GM12878 (cell line): ENCODE measurements at regions of chr15 and their contacts with region 1.

Region 1: GRCh38 chr15:90954712-90955671 is at the start of gene RCCD1:
- DNase-seq: peak; percentile 91
- ATAC-seq: peak; percentile 98
- H3K4me3 ChIP-seq: peak within 1 kb of the TSS; percentile 87
- H3K27ac ChIP-seq: peak within 1 kb of the TSS; percentile 98
- H3K4me1 ChIP-seq: peaks cover 3% of the 10 kb centered on the region; the same call in 1 of the 2 replicates
- H3K27me3 ChIP-seq: no peaks in the 10 kb centered on the region
- CTCF ChIP-seq: no peak
- EP300 ChIP-seq: no peak; a peak in 1 of 4 replicates
- POLR2A ChIP-seq: peak; percentile 93
- RAD21 ChIP-seq: no peak
- polyA plus RNA-seq, gene RCCD1: 5.2 to 8.0 TPM

Region 2: GRCh38 chr15:89575146-89575655 is 1379.8 kb before region 1 on chr15 and contains the start of gene TICRR:
- CTCF ChIA-PET with region 1: no interaction called
- POLR2A ChIA-PET with region 1: no interaction called
- RAD21 ChIA-PET with region 1: no interaction called
- SMC1A ChIA-PET with region 1: no interaction called
- in situ Hi-C with region 1: loop called (anchors 25 kb)
- intact Hi-C with region 1: no loop called
- DNase-seq: peak; percentile 99
- ATAC-seq: peak; percentile 94
- H3K4me3 ChIP-seq: peak within 1 kb of the TSS; percentile 87
- H3K27ac ChIP-seq: peak within 1 kb of the TSS; percentile 66
- H3K4me1 ChIP-seq: peaks cover 3% of the 10 kb centered on the region; the same call in 1 of the 2 replicates
- H3K27me3 ChIP-seq: no peaks in the 10 kb centered on the region
- CTCF ChIP-seq: no peak
- EP300 ChIP-seq: no peak
- POLR2A ChIP-seq: peak; percentile 75
- RAD21 ChIP-seq: no peak
- polyA plus RNA-seq, gene TICRR: 0.58 to 1.1 TPM

Region 3: DNA sequence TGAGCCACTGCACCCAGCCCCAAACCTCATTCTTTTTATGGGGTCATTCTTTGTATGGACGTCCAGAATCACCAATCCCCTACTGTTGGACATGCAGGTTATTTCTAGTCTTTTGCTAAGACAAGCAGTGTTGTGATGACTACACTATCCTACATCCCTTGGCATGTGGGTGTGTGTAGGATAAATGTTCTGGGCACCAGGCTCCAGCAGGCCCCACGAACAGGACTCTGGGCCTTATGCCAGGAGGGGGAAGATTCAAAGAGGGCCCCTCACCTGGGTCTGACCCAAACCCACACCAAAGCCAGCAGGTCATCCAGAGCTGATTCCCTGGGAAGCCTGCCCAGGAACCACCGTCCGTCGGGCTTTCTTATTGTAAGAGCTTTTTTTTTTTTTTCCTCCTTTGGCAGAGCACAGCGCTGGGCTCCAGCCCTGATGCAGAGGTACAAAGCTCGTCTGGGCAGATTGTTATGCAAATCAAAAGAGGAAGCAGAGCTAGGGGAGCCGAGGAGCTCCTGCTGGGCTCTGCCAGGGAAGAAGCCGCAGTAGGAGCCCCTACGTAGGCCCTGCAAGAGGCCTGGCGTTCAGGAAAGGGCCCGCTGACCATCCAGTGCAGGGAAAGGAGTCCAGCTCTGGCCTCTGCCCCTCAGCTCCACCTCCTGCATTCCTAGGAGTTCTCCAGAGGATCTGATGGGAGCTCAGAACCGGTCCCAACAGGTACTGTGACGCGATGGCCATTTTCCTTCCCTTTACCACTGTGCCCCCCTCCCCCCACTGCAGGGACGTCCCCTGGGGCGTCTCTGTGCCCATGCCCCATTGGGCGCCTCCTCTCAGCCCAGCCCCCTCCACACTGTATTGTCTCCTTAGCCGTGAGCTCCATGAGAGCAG is 115.6 kb before region 1 on chr15:
- CTCF ChIA-PET with region 1: no interaction called
- POLR2A ChIA-PET with region 1: no interaction called
- RAD21 ChIA-PET with region 1: no interaction called
- SMC1A ChIA-PET with region 1: no interaction called
- in situ Hi-C with region 1: no loop called
- intact Hi-C with region 1: no loop called
- DNase-seq: no peak
- ATAC-seq: peak; percentile 84
- H3K4me3 ChIP-seq: peak overlapping the region; percentile 50
- H3K27ac ChIP-seq: peak overlapping the region; percentile 56
- H3K4me1 ChIP-seq: peaks cover 22% of the 10 kb centered on the region
- H3K27me3 ChIP-seq: no peaks in the 10 kb centered on the region
- CTCF ChIP-seq: no peak
- EP300 ChIP-seq: no peak
- POLR2A ChIP-seq: peak; percentile 51
- RAD21 ChIP-seq: no peak

Region 4: GRCh38 chr15:90982135-90982534 is 27.1 kb after region 1 on chr15:
- CTCF ChIA-PET with region 1: interaction called, 22 read pairs
- POLR2A ChIA-PET with region 1: interaction called, 26 read pairs
- RAD21 ChIA-PET with region 1: interaction called, 4 read pairs
- SMC1A ChIA-PET with region 1: interaction called, 14 read pairs
- in situ Hi-C with region 1: no loop called
- intact Hi-C with region 1: no loop called
- DNase-seq: no peak
- ATAC-seq: peak; percentile 75
- H3K4me3 ChIP-seq: no peak overlapping the region
- H3K27ac ChIP-seq: peak overlapping the region; percentile 79
- H3K4me1 ChIP-seq: peaks cover 27% of the 10 kb centered on the region
- H3K27me3 ChIP-seq: no peaks in the 10 kb centered on the region
- CTCF ChIP-seq: no peak
- EP300 ChIP-seq: no peak
- POLR2A ChIP-seq: no peak
- RAD21 ChIP-seq: no peak

Region 5: GRCh38 chr15:91022075-91022835 is 67.3 kb after region 1 on chr15 and contains the start of gene VPS33B:
- CTCF ChIA-PET with region 1: interaction called, 5 read pairs
- POLR2A ChIA-PET with region 1: no interaction called
- RAD21 ChIA-PET with region 1: interaction called, 9 read pairs
- SMC1A ChIA-PET with region 1: interaction called, 3 read pairs
- in situ Hi-C with region 1: no loop called
- intact Hi-C with region 1: loop called (anchors 5 kb)
- DNase-seq: peak; percentile 63
- ATAC-seq: peak; percentile 86
- H3K4me3 ChIP-seq: peak within 1 kb of the TSS; percentile 93
- H3K27ac ChIP-seq: peak within 1 kb of the TSS; percentile 88
- H3K4me1 ChIP-seq: peaks cover 3% of the 10 kb centered on the region; the same call in 1 of the 2 replicates
- H3K27me3 ChIP-seq: no peaks in the 10 kb centered on the region
- CTCF ChIP-seq: no peak
- EP300 ChIP-seq: no peak
- POLR2A ChIP-seq: peak; percentile 80
- RAD21 ChIP-seq: no peak
- polyA plus RNA-seq, gene VPS33B: 11.8 to 18.6 TPM

Region 6: DNA sequence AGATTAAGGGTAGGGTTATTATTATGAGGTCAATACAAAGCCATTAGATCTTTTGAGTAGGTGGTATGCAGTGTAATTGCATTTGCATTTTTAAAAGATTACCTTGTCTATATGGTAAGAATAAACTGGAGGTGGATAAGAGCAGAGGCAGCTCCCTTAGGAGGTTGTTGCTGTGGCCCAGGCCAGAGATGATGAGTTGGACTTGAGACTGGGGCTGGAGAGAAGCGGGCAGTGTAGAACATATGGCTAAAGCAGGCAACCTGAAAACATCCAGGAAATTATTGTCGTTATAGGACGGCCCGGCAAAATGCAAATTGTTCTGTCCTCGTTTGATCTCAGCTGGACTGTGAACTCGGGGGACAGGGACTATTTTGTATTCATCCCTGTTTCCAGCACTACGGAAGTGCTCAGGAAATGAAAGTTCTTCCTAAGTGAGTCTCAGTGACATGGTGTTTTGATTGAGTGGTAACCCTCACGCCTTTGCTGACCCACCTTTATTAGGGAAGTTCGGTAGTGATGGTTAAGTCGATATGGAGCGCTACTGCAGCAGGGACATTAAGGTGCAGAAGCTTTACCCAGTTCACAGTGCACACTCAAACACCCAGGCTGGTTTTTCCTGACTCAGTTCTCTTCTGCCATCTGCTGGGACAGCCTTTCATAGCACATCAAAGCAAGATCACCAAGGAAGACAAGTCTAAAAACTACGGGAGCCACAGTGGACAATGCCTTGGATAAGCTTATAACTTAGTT is 94.6 kb after region 1 on chr15:
- CTCF ChIA-PET with region 1: interaction called, 7 read pairs
- POLR2A ChIA-PET with region 1: no interaction called
- RAD21 ChIA-PET with region 1: interaction called, 3 read pairs
- SMC1A ChIA-PET with region 1: interaction called, 4 read pairs
- in situ Hi-C with region 1: no loop called
- intact Hi-C with region 1: loop called (anchors 5 kb)
- DNase-seq: peak; percentile 12
- ATAC-seq: peak; percentile 96
- H3K4me3 ChIP-seq: no peak overlapping the region
- H3K27ac ChIP-seq: no peak overlapping the region
- H3K4me1 ChIP-seq: no peaks in the 10 kb centered on the region; the same call in 1 of the 2 replicates
- H3K27me3 ChIP-seq: no peaks in the 10 kb centered on the region; a peak in 2 of 4 replicates
- CTCF ChIP-seq: peak; percentile 68 to 72 (median 69)
- EP300 ChIP-seq: no peak
- POLR2A ChIP-seq: no peak
- RAD21 ChIP-seq: peak; percentile 77

Region 7: GRCh38 chr15:91098444-91098843 is 143.5 kb after region 1 on chr15:
- CTCF ChIA-PET with region 1: no interaction called
- POLR2A ChIA-PET with region 1: no interaction called
- RAD21 ChIA-PET with region 1: no interaction called
- SMC1A ChIA-PET with region 1: no interaction called
- in situ Hi-C with region 1: no loop called
- intact Hi-C with region 1: no loop called
- DNase-seq: no peak
- ATAC-seq: no peak
- H3K4me3 ChIP-seq: no peak overlapping the region
- H3K27ac ChIP-seq: no peak overlapping the region
- H3K4me1 ChIP-seq: no peaks in the 10 kb centered on the region
- H3K27me3 ChIP-seq: peaks cover 15 to 18% of the 10 kb centered on the region in 2 experiments
- CTCF ChIP-seq: no peak
- EP300 ChIP-seq: no peak
- POLR2A ChIP-seq: no peak
- RAD21 ChIP-seq: no peak